ENCODE measurements at regions of chr11 and their contacts with region 1.

Region 1: GRCh38 chr11:61384271-61385242 is 7.8 kb upstream of the TMEM216 start:
- DNase-seq: no peak
- ATAC-seq: no peak
- H3K4me3 ChIP-seq: no peak overlapping the region
- H3K4me3 Mint-ChIP-seq: no peak overlapping the region
- H3K27ac ChIP-seq: no peak overlapping the region
- H3K27ac Mint-ChIP-seq: no peak overlapping the region
- H3K4me1 ChIP-seq: no peaks in the 10 kb centered on the region
- H3K4me1 Mint-ChIP-seq: peaks cover 7% of the 10 kb centered on the region
- H3K27me3 ChIP-seq: no peaks in the 10 kb centered on the region
- H3K27me3 Mint-ChIP-seq: no peaks in the 10 kb centered on the region
- CTCF ChIP-seq: no peak

Region 2: GRCh38 chr11:61254403-61255025 is 130.0 kb before region 1 on chr11:
- CTCF ChIA-PET with region 1: interaction called, 46 read pairs
- POLR2A ChIA-PET with region 1: no interaction called
- intact Hi-C with region 1: loop called in 1 of 2 experiments (anchors 1 kb)
- DNase-seq: peak; percentile 31 to 70 (median 58)
- ATAC-seq: peak; percentile 91
- H3K4me3 ChIP-seq: no peak overlapping the region
- H3K4me3 Mint-ChIP-seq: no peak overlapping the region
- H3K27ac ChIP-seq: no peak overlapping the region
- H3K27ac Mint-ChIP-seq: no peak overlapping the region
- H3K4me1 ChIP-seq: no peaks in the 10 kb centered on the region
- H3K4me1 Mint-ChIP-seq: no peaks in the 10 kb centered on the region
- H3K27me3 ChIP-seq: no peaks in the 10 kb centered on the region
- H3K27me3 Mint-ChIP-seq: no peaks in the 10 kb centered on the region
- CTCF ChIP-seq: peak; percentile 70

Region 3: DNA sequence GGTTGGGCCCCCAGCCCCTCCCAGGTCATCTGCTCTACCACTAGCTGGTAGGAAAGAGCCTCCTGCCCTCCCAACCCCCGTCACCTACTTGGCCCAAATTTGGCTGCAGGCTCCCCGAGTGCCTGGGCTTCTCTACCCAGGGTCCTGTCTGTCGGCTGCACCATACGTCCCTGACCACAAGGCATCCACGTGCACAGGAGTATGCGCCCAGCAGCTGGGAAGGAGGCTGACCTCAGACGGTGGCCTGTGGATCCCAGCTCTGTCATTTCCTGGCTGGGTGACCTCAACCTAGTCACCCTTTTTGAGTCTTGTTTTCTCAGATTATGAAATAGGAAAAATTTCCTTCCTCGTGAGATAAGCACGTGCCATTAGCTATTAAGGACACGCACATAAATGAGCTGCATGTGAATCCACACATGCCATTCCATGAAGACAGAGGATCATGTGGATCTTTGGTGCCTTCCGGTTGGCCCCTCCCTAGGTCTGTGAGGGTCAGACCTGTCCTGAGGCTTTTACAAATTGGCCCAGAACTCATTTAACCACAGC is 36.6 kb before region 1 on chr11:
- CTCF ChIA-PET with region 1: interaction called, 470 read pairs
- POLR2A ChIA-PET with region 1: no interaction called
- intact Hi-C with region 1: no loop called
- DNase-seq: peak in 1 of 9 experiments; percentile 40
- ATAC-seq: no peak
- H3K4me3 ChIP-seq: no peak overlapping the region
- H3K4me3 Mint-ChIP-seq: no peak overlapping the region
- H3K27ac ChIP-seq: no peak overlapping the region
- H3K27ac Mint-ChIP-seq: peak overlapping the region; percentile 52
- H3K4me1 ChIP-seq: no peaks in the 10 kb centered on the region
- H3K4me1 Mint-ChIP-seq: no peaks in the 10 kb centered on the region
- H3K27me3 ChIP-seq: no peaks in the 10 kb centered on the region
- H3K27me3 Mint-ChIP-seq: no peaks in the 10 kb centered on the region
- CTCF ChIP-seq: no peak

Region 4: DNA sequence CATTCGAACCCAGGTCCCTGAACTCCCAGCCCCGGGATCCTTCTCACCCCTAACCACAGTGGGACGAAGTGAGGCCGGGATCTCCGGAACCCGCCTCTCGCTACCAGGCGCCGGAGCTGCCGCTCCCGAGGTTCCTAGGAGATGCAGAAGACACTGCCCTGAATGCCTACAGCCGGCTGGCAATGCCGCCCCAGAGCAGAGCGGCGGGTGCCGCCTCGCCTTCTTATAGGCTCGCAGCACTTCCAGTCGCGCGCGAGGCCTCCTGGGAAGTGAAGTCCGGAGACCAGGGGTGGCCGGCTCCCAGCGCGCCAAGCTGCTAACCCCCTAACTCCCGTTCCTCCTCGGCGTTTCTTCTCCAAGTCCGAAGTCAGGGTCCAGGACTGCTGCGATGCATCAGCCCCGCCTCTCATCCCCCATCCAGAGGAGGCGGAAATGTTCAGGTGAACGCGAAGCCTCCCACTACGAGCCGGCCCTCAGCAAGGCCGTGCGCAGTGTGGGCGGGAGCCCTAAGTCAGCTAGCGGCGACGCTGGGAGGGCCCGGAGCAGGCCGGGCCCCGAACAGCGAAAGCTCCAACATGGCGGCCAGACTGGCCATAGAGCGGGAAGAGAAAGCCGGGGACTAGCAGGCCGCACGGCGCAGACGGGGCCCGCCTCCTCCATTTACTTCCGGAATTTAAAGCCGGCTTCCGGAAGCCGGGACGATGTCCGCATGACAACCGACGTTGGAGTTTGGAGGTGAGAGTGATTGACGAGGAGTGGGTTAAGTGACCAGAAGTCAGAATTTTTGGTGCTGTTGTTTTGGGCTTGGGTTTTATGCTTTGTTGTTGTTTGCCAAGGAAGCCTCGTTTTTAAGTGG is 22.6 kb before region 1 on chr11 and contains the starts of genes CYB561A3 and TMEM138:
- CTCF ChIA-PET with region 1: interaction called, 25 read pairs
- POLR2A ChIA-PET with region 1: interaction called, 23 read pairs
- intact Hi-C with region 1: loop called (anchors 1 kb)
- DNase-seq: peak; percentile 68 to 93 (median 87)
- ATAC-seq: peak; percentile 84
- H3K4me3 ChIP-seq: peak within 1 kb of the TSS; percentile 94 to 98
- H3K4me3 Mint-ChIP-seq: peak within 1 kb of the TSS; percentile 98
- H3K27ac ChIP-seq: peak within 1 kb of the TSS; percentile 87 to 98
- H3K27ac Mint-ChIP-seq: peak within 1 kb of the TSS; percentile 98
- H3K4me1 ChIP-seq: peaks cover 20% of the 10 kb centered on the region
- H3K4me1 Mint-ChIP-seq: peaks cover 37% of the 10 kb centered on the region
- H3K27me3 ChIP-seq: no peaks in the 10 kb centered on the region
- H3K27me3 Mint-ChIP-seq: no peaks in the 10 kb centered on the region
- CTCF ChIP-seq: no peak
- total RNA-seq, gene CYB561A3: 23.1 to 28.1 TPM
- total RNA-seq, gene TMEM138: 60.7 to 62.5 TPM

Region 5: DNA sequence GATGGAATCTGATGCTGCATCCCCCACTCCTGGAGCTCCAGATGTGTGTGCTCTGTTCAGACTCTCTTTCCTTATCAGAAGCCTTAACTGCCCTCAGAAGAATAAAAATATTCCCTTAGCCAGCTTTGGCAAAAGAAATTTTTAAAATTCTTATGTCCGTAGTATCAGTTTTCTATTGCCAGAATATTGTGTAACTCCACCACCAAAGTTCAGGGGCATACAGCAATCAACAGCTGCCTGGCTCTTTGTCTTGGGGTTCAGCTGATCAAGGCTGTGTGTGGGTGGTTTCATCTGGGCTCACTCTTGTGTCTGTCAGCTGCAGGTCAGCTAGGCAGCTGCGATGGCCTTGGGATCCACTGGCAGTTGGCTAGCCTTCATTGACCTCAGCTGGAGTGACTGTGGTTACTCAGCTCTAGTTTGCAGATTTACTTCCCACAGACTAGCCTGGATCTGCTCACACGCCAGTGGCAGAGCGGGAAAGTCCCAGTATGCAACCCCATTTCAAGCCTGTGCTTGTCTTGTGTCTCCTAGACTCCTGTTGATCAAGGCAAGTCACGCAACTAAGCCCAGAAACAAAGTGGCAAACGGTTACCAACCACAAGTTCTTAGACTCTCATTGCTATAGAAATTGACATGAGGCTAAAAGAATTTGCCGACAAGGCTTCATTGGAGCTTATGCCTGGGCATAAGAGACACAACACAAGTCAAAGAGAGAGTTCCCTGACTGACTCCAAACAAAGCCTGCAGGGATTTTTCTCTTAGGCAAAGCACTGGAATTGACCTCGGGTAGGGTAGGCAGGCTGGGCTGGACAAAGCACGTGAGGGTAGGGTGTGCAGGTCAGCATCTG is 15.0 kb before region 1 on chr11:
- CTCF ChIA-PET with region 1: interaction called, 17 read pairs
- POLR2A ChIA-PET with region 1: interaction called, 10 read pairs
- intact Hi-C with region 1: no loop called
- DNase-seq: no peak
- ATAC-seq: no peak
- H3K4me3 ChIP-seq: no peak overlapping the region
- H3K4me3 Mint-ChIP-seq: no peak overlapping the region
- H3K27ac ChIP-seq: no peak overlapping the region
- H3K27ac Mint-ChIP-seq: no peak overlapping the region
- H3K4me1 ChIP-seq: no peaks in the 10 kb centered on the region
- H3K4me1 Mint-ChIP-seq: peaks cover 4% of the 10 kb centered on the region
- H3K27me3 ChIP-seq: no peaks in the 10 kb centered on the region
- H3K27me3 Mint-ChIP-seq: no peaks in the 10 kb centered on the region
- CTCF ChIP-seq: no peak

Region 6: DNA sequence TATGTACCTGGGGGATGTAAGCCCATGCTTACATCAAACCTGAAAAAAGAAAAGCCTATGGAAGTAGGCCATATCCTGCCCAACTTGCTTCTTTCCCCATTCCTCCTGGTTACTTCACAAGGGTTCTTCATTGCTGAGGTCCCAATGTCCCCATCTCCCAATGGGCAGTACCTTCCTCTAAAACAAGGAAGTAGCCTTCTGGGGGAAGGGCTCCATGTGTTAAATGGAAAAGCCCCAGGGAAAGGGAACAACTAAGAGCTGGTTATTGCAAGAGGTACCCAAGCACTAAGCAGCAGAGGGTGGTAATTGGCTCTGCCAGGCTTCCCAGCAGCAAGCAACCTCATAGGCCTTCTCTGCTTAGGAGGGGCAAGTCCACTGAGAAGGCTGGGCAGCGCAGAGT is 19.1 kb after region 1 on chr11:
- CTCF ChIA-PET with region 1: interaction called, 15 read pairs
- POLR2A ChIA-PET with region 1: no interaction called
- intact Hi-C with region 1: no loop called
- DNase-seq: no peak
- ATAC-seq: no peak
- H3K4me3 ChIP-seq: no peak overlapping the region
- H3K4me3 Mint-ChIP-seq: no peak overlapping the region
- H3K27ac ChIP-seq: no peak overlapping the region
- H3K27ac Mint-ChIP-seq: no peak overlapping the region
- H3K4me1 ChIP-seq: no peaks in the 10 kb centered on the region
- H3K4me1 Mint-ChIP-seq: peaks cover 3% of the 10 kb centered on the region
- H3K27me3 ChIP-seq: no peaks in the 10 kb centered on the region
- H3K27me3 Mint-ChIP-seq: no peaks in the 10 kb centered on the region
- CTCF ChIP-seq: no peak